ENCODE measurements at regions of chr2 and their contacts with region 1.

Region 1: GRCh38 chr2:234625626-234626250 is 128.9 kb upstream of the ARL4C start:
- DNase-seq: no peak
- H3K4me3 ChIP-seq: no peak overlapping the region
- H3K27ac ChIP-seq: no peak overlapping the region
- H3K4me1 ChIP-seq: peaks cover 8% of the 10 kb centered on the region
- H3K27me3 ChIP-seq: peaks cover 36 to 52% of the 10 kb centered on the region in 2 experiments
- CTCF ChIP-seq: no peak
- POLR2A ChIP-seq: no peak

Region 2: DNA sequence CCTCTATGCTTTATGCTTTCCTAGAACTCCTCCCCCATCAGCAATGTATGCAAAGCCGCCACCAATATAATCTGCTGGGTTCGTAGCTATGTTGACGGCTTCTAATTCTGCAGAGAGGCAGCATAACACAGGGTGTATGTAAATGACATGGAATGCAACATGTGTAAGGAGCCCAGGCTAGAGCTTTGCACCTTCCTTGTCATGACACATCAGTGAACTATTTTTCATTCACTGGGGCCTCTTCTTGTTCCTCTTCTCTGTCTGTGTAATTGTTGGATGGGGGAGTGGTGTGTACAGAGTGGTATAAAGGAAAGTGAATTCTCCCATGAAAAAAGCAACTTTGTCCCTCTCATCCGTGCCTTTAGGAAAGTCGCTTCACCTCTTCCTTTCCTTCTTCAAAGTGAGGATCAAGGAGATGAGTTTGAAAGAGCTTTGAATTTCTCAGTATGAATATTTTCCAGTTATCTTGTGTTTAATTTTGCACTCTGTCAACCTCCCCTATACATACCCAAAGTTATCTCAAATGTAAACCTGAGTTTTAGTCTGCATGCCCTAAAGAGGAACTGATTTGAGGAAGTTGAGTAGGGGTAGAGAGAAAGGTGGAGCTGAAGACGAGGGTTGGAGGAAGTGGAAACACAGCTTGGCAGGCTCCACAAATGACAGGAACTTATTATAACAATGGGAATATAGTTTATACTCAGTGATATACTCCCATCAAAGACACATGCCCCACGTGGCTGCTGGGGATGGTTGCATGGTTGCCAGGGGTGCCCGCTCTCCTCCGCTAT is 53.9 kb before region 1 on chr2:
- CTCF ChIA-PET with region 1: no interaction called
- POLR2A ChIA-PET with region 1: no interaction called
- dilution Hi-C with region 1: no loop called
- intact Hi-C with region 1: no loop called
- DNase-seq: no peak
- H3K4me3 ChIP-seq: no peak overlapping the region
- H3K27ac ChIP-seq: no peak overlapping the region
- H3K4me1 ChIP-seq: no peaks in the 10 kb centered on the region
- H3K27me3 ChIP-seq: peaks cover 5 to 6% of the 10 kb centered on the region in 2 experiments
- CTCF ChIP-seq: no peak
- POLR2A ChIP-seq: no peak

Region 3: GRCh38 chr2:234669621-234670020 is 43.9 kb after region 1 on chr2:
- CTCF ChIA-PET with region 1: no interaction called
- POLR2A ChIA-PET with region 1: no interaction called
- dilution Hi-C with region 1: no loop called
- intact Hi-C with region 1: loop called (anchors 5 kb)
- DNase-seq: no peak
- H3K4me3 ChIP-seq: no peak overlapping the region
- H3K27ac ChIP-seq: no peak overlapping the region
- H3K4me1 ChIP-seq: peaks cover 16% of the 10 kb centered on the region
- H3K27me3 ChIP-seq: peaks cover 0 to 6% of the 10 kb centered on the region in 2 experiments
- CTCF ChIP-seq: peak in 1 of 2 donors; percentile 24
- POLR2A ChIP-seq: no peak

Measured in endothelial cell of umbilical vein (primary cell).